ENCODE measurements at regions of chr11 and their contacts with region 1.

Region 1: DNA sequence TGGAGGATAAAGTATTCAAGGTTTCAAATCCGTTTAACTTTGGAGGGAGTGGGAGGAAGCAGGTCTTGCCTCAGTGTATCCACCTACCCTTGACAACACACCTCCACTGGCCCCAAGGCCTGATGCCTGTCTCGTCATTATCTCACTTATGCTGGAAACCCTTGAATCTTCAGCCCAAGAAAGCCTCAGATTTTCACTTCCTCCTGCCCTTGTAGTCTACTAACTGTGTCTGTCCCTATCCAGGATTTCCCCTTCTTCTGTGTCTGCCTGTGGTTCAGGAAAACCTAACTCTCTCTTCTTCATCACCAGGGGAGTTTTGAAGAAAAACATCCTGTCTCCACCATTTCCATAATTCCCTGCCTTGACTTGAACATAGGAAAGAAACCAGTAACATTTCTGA is 56.1 kb downstream of the SYT9 start:
- DNase-seq: no peak

Region 2: DNA sequence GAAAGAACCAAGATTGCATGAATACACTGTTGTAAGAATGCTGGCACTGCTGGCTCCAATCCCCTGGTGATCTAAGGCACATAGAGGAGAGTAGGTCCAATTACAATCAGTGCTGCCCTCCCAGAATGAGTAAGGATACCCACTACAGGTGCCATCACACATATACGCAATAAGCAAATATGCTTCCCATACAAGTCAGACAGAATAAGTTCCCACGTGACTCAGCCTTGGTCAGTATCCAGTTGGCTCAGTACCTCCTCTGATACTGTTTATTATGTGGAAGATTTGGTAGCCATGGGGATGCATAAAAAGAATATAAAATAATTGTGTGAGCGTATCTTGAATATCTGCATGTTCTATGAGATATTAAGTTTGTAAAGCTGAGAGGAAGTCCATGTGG is 395.9 kb before region 1 on chr11:
- intact Hi-C with region 1: loop called (anchors 10 kb)
- DNase-seq: no peak

Region 3: GRCh38 chr11:7020183-7020917 is 287.5 kb before region 1 on chr11 and contains the starts of genes NLRP14 and ZNF214:
- intact Hi-C with region 1: no loop called
- DNase-seq: peak; percentile 77 to 95 (median 89)

Measured in head of caudate nucleus (tissue), 42 donors.